Mammary epithelial cell (primary cell): ENCODE measurements at regions of chr12 and their contacts with region 1.

Region 1: GRCh38 chr12:6688999-6689882 is at the start of gene ZNF384:
- DNase-seq: peak; percentile 99
- H3K4me3 ChIP-seq: peak within 1 kb of the TSS; percentile 76 to 93 (median 87)
- H3K27ac ChIP-seq: peak within 1 kb of the TSS; percentile 84
- H3K4me1 ChIP-seq: peaks cover 7% of the 10 kb centered on the region
- H3K27me3 ChIP-seq: no peaks in the 10 kb centered on the region
- CTCF ChIP-seq: peak in 1 of 2 donors; percentile 9
- total RNA-seq, gene ZNF384: 12.8 to 45.0 TPM

Region 2: DNA sequence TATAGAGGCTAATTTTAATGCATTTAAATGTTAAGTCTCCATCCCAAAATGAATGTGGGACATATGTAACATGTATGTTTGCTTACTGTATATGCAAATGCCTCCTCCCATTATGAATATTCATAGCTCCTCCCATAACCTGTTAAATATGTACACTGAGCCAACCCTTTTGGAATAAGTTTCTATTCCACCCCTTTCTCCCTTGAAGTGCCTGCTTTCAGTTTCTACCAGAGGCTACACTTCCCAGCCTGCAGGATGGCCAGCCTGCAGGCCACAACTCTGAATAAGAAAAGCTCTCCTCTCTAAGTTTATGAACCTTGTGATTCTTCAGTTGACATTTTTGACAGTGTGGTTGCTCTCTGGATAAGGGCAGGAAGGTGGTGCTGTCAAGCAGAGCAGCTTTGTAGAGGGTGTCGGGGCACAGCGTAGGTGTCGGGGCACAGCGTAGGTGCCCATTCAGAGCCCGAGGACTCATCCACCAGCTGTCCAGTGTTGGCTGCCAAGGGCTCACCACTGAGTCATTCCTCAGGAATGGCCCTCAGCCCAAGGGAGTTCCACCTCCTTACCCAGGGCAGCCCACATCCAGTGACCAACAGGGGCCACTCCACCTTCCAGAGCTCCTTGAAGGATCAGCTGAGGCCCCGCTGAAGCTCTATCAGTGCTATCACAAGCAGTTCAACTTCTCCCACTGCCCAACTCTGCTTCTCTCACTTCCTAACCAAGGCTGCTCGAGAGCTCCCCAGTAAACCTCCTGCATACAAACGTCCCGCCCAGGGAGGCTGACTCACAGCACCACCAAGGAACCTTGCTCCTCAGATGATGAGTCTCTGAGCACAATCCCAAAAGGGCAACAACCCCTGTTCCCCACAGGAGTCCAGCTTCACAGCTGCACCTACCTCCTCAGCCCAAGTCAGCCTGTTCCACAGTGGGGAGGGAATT is 596.2 kb before region 1 on chr12:
- CTCF ChIA-PET with region 1: no interaction called
- dilution Hi-C with region 1: no loop called
- in situ Hi-C with region 1: no loop called
- intact Hi-C with region 1: no loop called
- DNase-seq: peak; percentile 95
- H3K4me3 ChIP-seq: no peak overlapping the region
- H3K27ac ChIP-seq: peak overlapping the region; percentile 65
- H3K4me1 ChIP-seq: peaks cover 52% of the 10 kb centered on the region
- H3K27me3 ChIP-seq: no peaks in the 10 kb centered on the region
- CTCF ChIP-seq: peak in 1 of 2 donors; percentile 17

Region 3: DNA sequence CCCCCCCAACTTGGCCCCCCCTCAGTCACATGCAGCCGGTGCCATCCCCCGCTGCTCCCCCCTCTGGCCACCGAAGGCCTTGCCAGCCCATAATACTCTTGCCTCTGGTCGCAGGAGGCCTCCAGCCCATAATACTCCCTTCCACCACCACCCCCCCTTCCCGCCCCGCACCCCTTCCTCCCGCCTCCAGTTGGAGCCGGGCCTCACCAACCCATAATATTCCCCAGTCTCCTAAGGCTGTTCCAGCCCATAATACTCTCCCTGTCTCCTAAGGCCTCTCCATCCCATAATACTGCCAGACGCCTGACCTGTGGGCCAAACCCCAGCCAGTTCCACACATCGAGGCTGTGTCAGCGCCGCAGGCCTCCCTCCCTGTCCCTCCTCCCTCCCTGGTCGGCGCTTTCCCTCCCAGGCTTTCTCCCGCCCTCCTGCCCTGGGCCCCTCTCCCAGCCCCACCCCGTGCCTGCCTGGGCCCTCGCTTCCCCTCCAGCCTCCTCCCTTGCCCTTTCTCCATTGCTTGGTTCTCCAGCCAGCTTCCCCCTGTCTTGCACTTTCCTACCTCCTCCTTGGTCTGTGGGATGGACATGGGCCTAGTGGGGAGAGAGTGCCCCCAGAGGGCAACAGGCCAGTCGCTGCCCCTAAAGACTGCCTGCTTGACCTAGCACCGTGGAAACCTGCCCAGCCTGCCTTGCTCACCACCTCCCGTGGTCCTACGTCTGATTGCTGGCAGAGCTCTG is 75.3 kb before region 1 on chr12:
- CTCF ChIA-PET with region 1: interaction called, 3 read pairs
- dilution Hi-C with region 1: no loop called
- in situ Hi-C with region 1: no loop called
- intact Hi-C with region 1: loop called (anchors 2 kb)
- DNase-seq: peak; percentile 65
- H3K4me3 ChIP-seq: no peak overlapping the region
- H3K27ac ChIP-seq: no peak overlapping the region
- H3K4me1 ChIP-seq: peaks cover 17% of the 10 kb centered on the region
- H3K27me3 ChIP-seq: no peaks in the 10 kb centered on the region
- CTCF ChIP-seq: no peak

Region 4: DNA sequence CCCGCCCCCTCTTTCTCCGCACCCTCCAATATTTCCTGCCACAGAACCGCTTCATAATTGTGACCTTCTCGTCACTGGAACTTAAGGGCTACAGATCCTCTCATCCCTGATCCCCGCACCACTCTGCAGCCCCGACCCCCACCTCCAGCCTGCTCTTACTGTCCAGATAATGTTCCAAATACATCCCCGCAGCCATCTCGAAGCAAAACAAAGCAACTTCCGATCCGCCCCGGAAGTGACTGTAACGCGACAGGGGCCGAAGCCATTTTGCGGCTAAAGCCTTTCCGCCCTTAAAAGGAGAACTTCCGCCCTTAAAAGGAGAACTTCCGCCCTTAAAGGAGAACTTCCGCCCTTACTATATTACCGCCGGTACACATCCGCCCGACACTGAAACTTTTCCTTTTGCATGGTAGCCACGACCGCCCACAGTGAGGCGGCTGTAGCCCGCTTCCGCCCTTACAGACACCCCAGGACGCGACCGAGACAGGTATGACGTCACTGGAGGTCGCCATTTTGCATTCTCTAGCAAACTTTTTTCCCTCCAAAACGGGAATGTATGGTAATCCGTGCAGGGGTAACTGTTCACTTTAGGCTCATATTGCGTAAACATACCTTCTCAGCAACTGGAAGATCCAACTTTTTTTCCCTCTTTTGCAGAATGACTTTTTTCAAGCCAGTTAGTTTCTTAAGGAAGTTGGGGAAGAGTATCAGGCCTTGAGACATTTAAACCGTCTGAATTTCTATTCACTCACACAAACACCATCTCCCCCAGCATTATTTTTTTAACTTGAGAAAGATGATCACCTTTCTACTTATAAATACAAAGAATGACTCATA is 26.1 kb before region 1 on chr12 and contains the start of gene ING4:
- CTCF ChIA-PET with region 1: no interaction called
- dilution Hi-C with region 1: no loop called
- in situ Hi-C with region 1: no loop called
- intact Hi-C with region 1: loop called (anchors 1 kb)
- DNase-seq: peak; percentile 99
- H3K4me3 ChIP-seq: peak within 1 kb of the TSS; percentile 67 to 71 (median 69)
- H3K27ac ChIP-seq: peak within 1 kb of the TSS; percentile 44
- H3K4me1 ChIP-seq: peaks cover 8% of the 10 kb centered on the region
- H3K27me3 ChIP-seq: no peaks in the 10 kb centered on the region
- CTCF ChIP-seq: no peak
- total RNA-seq, gene ING4: 14.8 to 34.8 TPM

Region 5: DNA sequence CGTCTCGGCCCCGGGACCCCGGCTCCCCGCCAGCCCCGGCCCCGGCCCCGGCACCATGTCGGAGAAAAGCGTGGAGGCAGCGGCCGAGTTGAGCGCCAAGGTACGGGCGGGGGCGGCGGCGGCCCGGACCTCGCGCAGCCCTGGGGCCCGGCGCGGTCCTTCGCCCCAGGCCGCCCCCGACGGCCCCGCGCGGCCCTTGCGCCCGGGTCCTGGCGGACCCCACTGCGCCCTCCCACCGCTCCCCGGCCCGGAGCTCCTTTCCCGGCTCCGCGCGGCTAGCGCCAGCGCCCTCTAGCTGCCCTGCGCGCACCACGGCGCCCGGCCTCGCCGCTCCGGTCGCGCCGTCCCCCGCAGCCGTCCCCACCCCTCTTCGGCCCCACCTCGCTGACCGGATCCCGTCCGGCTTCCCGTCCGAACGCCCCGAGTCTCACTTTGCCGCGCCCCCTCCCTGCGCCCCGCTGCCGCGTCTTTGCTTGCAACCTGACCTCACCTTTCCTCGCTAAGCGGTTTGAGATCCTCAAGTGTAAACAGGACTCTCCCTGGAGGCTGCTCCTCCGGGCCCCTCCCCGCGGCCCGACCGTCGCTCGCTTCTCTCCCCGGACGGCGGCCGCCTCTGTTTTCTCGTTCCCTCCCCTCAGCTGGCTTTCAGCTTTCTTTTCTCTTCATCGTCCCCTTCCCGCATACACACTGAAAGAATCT is 77.6 kb after region 1 on chr12:
- CTCF ChIA-PET with region 1: interaction called, 3 read pairs
- dilution Hi-C with region 1: loop called (anchors 5 kb)
- in situ Hi-C with region 1: no loop called
- intact Hi-C with region 1: loop called (anchors 5 kb)
- DNase-seq: peak; percentile 73
- H3K4me3 ChIP-seq: peak overlapping the region; percentile 41 to 78 (median 76)
- H3K27ac ChIP-seq: no peak overlapping the region
- H3K4me1 ChIP-seq: peaks cover 33% of the 10 kb centered on the region
- H3K27me3 ChIP-seq: no peaks in the 10 kb centered on the region
- CTCF ChIP-seq: peak; percentile 28 to 50